Posterior vena cava (tissue), 2 donors: ENCODE measurements at regions of chr20 and their contacts with region 1.

Region 1: GRCh38 chr20:36784900-36785299 is 11.3 kb upstream of the DSN1 start:
- DNase-seq: peak; percentile 67

Region 2: DNA sequence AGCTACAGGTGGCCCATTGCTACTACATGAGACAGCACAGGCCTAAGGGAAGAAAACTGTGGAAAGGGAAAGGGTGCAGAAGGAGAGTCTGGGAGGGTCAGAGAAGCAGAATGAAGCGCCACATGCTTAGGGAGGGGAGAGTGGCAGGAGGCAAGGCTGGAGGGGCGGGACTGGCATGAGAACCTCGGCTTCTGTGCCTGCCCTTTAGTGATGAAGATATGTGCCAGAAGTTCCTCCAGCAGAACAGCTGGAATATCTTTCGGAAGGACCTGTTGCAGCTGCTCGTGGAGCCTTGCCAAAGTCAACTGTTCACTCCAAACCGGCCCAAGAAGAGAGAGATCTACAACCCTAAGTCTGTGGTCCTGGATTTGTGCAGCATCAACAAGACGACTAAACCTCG is 754.8 kb before region 1 on chr20:
- intact Hi-C with region 1: no loop called
- DNase-seq: peak; percentile 41

Region 3: GRCh38 chr20:36116807-36117441 is 668.0 kb before region 1 on chr20:
- intact Hi-C with region 1: no loop called
- DNase-seq: no peak

Region 4: GRCh38 chr20:36736451-36737182 is 48.3 kb before region 1 on chr20:
- intact Hi-C with region 1: no loop called
- DNase-seq: no peak

Region 5: GRCh38 chr20:36872852-36873251 is 88.0 kb after region 1 on chr20:
- intact Hi-C with region 1: loop called in 1 of 2 experiments (anchors 10 kb)
- DNase-seq: peak; percentile 70

Region 6: GRCh38 chr20:37584238-37584807 is 799.4 kb after region 1 on chr20:
- intact Hi-C with region 1: no loop called
- DNase-seq: no peak